ENCODE measurements at regions of chr11 and their contacts with region 1.

Region 1: DNA sequence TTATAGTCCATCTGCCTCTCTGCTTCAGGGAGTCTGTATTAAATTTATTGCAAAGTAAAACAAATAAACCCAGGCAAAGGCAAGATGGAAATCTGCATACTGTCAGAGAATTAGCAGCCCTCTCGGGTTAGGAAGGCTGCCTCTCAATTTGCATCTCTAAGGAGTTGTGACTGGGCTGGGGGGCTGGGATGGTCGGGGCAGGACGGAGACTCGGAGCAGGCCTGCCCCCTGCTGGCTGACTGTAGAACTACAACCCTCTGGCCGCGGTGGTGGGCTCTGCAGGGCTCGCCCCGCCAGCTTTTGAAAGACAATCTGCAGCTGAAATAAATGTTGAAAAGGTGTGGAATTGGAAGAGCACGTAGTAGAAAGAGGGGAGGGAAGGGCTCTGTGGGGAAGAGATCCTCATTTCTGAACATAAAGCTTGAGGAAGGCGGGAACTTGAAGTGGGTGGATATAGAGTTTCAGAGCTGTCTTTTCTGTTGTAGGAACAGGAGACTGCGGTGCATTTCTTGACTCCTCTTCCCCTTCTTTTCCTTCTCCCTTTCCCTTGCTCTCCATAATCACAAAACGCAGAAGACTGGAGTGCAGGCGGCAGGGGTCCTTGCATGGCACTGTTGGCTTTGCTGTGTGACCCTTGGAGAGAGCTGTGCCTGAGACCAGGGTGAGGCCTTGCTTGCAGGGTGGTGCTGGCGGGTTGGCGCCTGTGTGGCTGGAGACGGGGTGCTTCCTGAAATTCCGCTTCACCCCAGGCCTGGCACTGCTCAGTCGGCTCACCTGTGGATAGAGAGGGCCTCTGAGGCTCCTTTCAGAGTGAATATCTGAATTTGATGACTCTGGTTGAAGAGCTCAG is 22.6 kb upstream of the PKNOX2 start:
- DNase-seq: no peak
- ATAC-seq: peak; percentile 97
- H3K4me3 ChIP-seq: no peak overlapping the region
- H3K27ac ChIP-seq: no peak overlapping the region
- H3K4me1 ChIP-seq: peaks cover 0 to 2% of the 10 kb centered on the region in 2 experiments; a peak in 1 of 4 replicates
- H3K27me3 ChIP-seq: no peaks in the 10 kb centered on the region
- CTCF ChIP-seq: peak; percentile 79 to 98 (median 93)
- POLR2A ChIP-seq: no peak
- RAD21 ChIP-seq: peak; percentile 90

Region 2: DNA sequence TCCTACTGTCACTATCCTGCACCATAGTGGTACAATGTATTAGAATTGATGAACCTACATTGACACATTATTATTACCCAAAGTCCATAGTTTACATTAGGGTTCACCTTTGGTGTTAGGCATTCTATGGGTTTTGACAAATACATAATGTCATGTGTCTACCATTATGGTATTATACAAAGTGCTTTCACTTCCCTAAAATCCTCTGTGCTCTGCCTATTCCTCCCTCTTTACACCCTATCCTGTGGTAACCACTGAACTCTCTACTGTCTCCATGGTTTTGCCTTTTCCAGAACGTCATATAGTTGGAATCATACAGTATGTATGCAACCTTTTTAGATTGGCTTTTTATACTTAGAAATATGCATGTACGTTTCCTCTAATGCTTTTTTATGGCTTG is 136.4 kb before region 1 on chr11:
- CTCF ChIA-PET with region 1: no interaction called
- POLR2A ChIA-PET with region 1: no interaction called
- RAD21 ChIA-PET with region 1: no interaction called
- intact Hi-C with region 1: no loop called
- DNase-seq: no peak
- ATAC-seq: no peak
- H3K4me3 ChIP-seq: no peak overlapping the region
- H3K27ac ChIP-seq: no peak overlapping the region
- H3K4me1 ChIP-seq: no peaks in the 10 kb centered on the region
- H3K27me3 ChIP-seq: no peaks in the 10 kb centered on the region
- CTCF ChIP-seq: no peak
- POLR2A ChIP-seq: no peak
- RAD21 ChIP-seq: no peak

Region 3: DNA sequence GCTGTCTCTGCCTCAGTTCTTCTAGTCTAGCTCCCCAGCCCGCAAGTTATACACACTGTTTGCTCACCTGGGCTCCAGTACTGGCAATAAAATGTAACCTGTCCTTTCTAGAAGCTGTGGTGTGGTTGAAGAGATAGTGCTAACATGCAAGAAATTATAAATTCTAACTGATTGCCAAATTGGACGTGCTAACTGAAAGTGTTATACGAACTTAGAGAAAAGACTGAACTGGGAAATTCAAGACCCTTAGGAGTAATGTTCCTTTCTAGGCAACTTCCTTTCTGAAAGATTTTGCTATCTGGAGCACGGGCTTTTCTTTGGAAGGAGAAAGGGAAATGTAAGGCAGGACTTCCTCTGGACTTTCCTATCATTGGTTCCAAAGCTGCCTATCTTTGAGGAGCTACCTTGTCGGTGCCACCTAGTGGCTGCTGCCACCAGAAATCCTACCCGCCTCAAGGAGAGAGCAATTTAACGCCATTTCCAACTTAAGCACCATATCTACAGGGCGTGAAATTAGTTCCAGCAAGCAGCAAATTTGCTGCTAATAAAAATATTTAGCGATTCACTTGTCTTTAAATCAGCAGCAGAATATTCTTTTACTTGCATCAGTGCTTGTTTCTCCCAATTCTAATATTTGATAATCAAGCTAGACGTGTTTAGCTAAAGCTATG is 17.8 kb before region 1 on chr11:
- CTCF ChIA-PET with region 1: interaction called, 13 read pairs
- POLR2A ChIA-PET with region 1: interaction called, 8 read pairs
- RAD21 ChIA-PET with region 1: interaction called in 1 of 2 experiments, 6 read pairs
- intact Hi-C with region 1: no loop called
- DNase-seq: peak; percentile 86
- ATAC-seq: peak; percentile 99
- H3K4me3 ChIP-seq: peak overlapping the region; percentile 29 to 52
- H3K27ac ChIP-seq: peak overlapping the region; percentile 26; the same call in 1 of the 2 replicates
- H3K4me1 ChIP-seq: peaks cover 4 to 15% of the 10 kb centered on the region in 2 experiments; a peak in 3 of 4 replicates
- H3K27me3 ChIP-seq: 0 out of 2 replicates have a peak, but pooled peaks cover 4% of the 10 kb centered on the region
- CTCF ChIP-seq: peak; percentile 44 to 72 (median 68); a peak in 5 of 6 replicates
- POLR2A ChIP-seq: peak; percentile 81
- RAD21 ChIP-seq: peak; percentile 37; the same call in 1 of the 2 replicates

Region 4: DNA sequence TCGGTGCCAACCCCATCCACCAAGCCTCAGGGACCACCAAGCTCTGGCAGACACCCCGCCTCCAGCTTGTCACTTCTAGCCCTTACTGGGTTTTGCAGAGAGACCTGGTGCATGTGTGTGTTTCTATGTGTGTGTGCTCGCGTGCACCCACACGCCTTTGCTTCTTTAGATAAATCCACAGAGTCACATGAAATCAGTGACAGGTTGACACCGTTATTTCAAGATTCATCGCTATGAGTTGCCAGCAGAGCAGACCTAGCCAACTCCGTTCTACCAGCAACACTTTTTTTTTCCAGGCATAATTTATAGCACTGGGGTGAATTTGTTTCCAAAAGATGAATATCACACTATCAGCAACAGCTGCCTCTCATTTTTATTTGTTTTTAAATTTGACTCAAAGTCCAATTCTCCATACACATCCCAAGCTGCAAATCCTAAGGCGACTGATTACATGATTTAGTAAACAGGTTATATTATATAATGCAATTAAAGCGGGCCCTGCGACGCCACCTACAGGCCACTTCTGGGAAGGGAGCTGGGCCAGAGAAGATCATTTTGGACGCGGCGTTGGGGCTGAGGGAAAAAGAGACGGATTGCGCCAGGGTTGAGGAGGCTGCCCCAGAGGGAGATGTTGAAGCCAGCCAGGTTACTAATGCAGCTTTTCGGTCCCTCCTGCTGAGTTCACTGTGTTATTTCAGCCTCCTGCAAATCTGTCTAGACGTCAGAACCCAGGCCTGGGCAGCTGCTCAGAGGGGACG is 203.7 kb after region 1 on chr11:
- CTCF ChIA-PET with region 1: interaction called, 9 read pairs
- POLR2A ChIA-PET with region 1: no interaction called
- RAD21 ChIA-PET with region 1: no interaction called
- intact Hi-C with region 1: loop called (anchors 10 kb)
- DNase-seq: no peak
- ATAC-seq: peak; percentile 84
- H3K4me3 ChIP-seq: no peak overlapping the region
- H3K27ac ChIP-seq: no peak overlapping the region
- H3K4me1 ChIP-seq: peaks cover 0 to 2% of the 10 kb centered on the region in 2 experiments; a peak in 1 of 4 replicates
- H3K27me3 ChIP-seq: no peaks in the 10 kb centered on the region
- CTCF ChIP-seq: peak; percentile 83 to 92 (median 91)
- POLR2A ChIP-seq: no peak
- RAD21 ChIP-seq: peak; percentile 72

Region 5: DNA sequence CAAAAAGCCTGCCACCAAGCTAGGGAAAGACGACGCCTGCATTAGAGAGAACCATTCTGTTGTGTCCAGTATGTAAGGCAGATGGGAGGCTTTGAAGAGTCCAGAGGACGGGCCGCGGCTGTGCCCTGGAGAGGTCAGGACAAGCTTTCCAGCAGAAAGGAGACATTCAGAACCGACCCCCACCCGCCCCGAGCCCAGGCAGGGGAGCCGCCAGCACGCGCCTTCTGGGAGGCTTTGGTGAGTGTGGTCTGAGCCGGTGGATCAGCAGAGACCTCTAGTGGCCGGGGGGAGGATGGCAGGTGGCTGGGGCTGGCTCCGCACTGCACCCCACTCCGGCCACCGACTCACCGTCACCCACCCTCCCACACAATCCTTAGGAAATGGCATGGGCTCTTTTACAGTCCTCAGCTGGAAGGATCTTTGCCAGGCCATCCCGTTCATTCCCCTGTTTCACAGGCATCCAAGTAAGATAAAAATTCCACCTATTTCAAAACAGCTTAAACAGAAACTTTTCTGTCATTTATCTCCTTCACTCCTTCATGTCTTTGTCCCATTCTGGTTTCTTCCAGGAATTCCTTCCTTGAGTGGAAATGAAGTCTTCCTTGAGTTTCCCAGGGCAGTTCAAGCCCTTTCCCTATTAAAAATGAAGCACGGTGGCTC is 263.0 kb after region 1 on chr11:
- CTCF ChIA-PET with region 1: no interaction called
- POLR2A ChIA-PET with region 1: no interaction called
- RAD21 ChIA-PET with region 1: no interaction called
- intact Hi-C with region 1: loop called (anchors 10 kb)
- DNase-seq: peak; percentile 21
- ATAC-seq: peak; percentile 98
- H3K4me3 ChIP-seq: no peak overlapping the region; a peak in 1 of 4 replicates
- H3K27ac ChIP-seq: no peak overlapping the region
- H3K4me1 ChIP-seq: peaks cover 0 to 9% of the 10 kb centered on the region in 2 experiments; a peak in 2 of 4 replicates
- H3K27me3 ChIP-seq: peaks cover 39% of the 10 kb centered on the region
- CTCF ChIP-seq: peak; percentile 70 to 89 (median 88)
- POLR2A ChIP-seq: no peak
- RAD21 ChIP-seq: peak; percentile 83

Region 6: GRCh38 chr11:125481531-125481930 is 339.6 kb after region 1 on chr11:
- CTCF ChIA-PET with region 1: no interaction called
- POLR2A ChIA-PET with region 1: no interaction called
- RAD21 ChIA-PET with region 1: no interaction called
- intact Hi-C with region 1: no loop called
- DNase-seq: no peak
- ATAC-seq: no peak
- H3K4me3 ChIP-seq: no peak overlapping the region
- H3K27ac ChIP-seq: no peak overlapping the region
- H3K4me1 ChIP-seq: no peaks in the 10 kb centered on the region
- H3K27me3 ChIP-seq: no peaks in the 10 kb centered on the region
- CTCF ChIP-seq: no peak
- POLR2A ChIP-seq: no peak
- RAD21 ChIP-seq: no peak